Activated CD4-positive, alpha-beta memory T cell treated with anti-CD3 and anti-CD28 coated beads, Interleukin-2, amount 10 ng/mL, durations not matched to agents 7 days and 5 days (primary cell): ENCODE measurements at regions of chr11 and their contacts with region 1.

Region 1: DNA sequence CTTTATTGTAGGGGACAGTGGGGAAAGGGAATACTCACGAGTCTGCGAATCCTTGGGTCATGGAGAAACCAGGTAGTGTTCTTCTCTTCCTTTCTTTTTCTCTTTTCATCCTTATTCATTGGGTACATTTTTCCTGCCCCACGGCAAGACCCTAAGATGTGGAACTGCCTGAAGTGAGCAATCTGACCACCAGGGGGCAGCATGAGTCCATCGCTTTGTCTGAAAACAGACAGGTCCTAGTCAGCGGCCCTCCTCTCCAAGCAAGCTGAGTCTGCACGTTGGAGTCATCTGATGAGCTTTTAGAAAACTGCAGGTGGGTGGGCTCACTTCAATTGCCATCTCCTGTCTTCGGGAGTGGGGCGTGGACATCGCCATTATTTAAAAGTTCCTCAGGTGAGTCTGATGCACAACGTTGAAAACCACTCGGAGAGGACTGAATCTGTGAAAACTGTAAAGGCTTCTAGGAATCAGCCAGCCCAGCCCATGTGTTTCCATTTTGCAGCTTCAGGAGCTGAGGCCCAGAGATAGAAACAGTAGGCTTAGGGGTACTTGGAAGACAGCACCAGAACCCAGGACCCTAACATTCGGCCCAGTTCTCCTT is 34.0 kb upstream of the FBXO3 start:
- DNase-seq: peak; percentile 82
- H3K4me3 Mint-ChIP-seq: no peak overlapping the region
- H3K27ac Mint-ChIP-seq: no peak overlapping the region
- H3K4me1 Mint-ChIP-seq: peaks cover 3% of the 10 kb centered on the region
- H3K27me3 Mint-ChIP-seq: peaks cover 33% of the 10 kb centered on the region

Region 2: DNA sequence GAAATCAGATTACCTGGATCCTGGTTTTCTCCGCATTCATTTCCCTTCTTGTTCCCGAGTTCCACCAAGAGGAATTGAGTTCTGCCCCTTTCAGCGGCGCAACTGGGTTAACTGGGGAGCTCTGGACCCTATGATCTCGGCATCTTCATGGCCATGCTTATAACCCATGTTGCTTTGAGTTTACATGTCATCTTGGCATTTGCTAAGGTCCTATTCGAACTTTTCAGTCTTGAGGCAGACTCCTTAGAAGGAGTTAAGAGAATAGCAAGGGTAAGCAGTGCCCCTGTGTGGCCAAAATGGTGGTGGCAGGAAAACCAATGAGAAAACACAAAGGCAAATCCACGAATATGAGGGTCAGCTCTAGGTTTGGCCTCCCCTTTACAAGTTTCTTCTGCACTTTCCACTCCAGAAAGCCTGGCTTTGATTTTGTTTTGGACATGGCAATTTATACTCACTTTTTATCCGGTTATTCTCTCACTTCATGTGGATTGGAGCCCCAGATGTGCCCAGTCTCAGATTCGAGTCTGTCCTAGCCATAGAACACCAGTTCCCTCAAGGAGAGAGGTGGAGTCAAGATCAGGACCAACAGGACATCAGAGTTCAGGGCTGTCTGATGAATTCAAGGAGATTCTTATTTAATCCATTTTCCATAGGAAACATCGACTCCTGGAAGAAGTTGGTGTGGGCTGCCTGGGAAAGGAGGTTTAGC is 21.3 kb after region 1 on chr11:
- CTCF ChIA-PET with region 1: interaction called, 61 read pairs
- POLR2A ChIA-PET with region 1: no interaction called
- DNase-seq: peak; percentile 65
- H3K4me3 Mint-ChIP-seq: peak overlapping the region; percentile 25
- H3K27ac Mint-ChIP-seq: no peak overlapping the region
- H3K4me1 Mint-ChIP-seq: peaks cover 5% of the 10 kb centered on the region
- H3K27me3 Mint-ChIP-seq: peaks cover 59% of the 10 kb centered on the region

Region 3: GRCh38 chr11:33835143-33835878 is 27.0 kb after region 1 on chr11:
- CTCF ChIA-PET with region 1: interaction called, 61 read pairs
- POLR2A ChIA-PET with region 1: no interaction called
- DNase-seq: no peak
- H3K4me3 Mint-ChIP-seq: no peak overlapping the region
- H3K27ac Mint-ChIP-seq: no peak overlapping the region
- H3K4me1 Mint-ChIP-seq: no peaks in the 10 kb centered on the region
- H3K27me3 Mint-ChIP-seq: peaks cover 37% of the 10 kb centered on the region